CD4-positive, alpha-beta T cell (primary cell): ENCODE measurements at regions of chr5 and their contacts with region 1.

Region 1: DNA sequence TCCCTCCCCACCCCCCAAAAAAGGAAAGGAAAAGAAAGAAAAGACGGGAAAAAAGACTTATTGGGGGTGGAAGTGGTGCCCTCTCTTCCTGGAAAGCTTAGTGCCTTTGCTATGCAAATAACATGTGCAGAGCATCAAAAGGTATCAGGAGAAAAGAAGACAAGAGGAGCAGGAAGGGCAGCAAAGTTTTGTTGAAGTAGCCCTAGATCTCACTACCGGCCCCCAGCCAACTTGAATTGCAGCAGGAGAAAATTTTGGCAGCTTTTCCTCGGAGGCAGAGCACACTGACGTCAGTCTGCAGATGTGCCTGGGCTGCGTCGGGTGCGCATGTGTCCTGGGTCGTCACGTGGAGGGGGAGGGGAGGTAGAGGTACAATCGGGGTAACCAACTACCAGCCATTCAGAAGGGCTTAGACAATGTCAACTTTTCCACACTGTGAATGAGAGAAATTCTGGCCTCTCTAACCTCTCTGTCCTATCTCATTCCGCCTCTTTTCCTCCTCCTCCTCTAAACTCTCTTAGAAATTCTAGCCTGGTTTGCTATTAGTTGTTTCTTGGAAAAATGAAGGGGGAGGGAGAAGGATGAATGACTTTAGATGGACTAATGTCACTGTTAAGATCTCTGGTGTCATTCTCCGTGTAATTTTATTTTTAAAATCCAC is at the start of gene ADAMTS6:
- DNase-seq: peak; percentile 46 to 88 (median 72)
- ATAC-seq: peak; percentile 87
- H3K4me3 ChIP-seq: peak within 1 kb of the TSS; percentile 78
- H3K4me3 Mint-ChIP-seq: peak within 1 kb of the TSS; percentile 94
- H3K27ac ChIP-seq: peak within 1 kb of the TSS in 1 of 2 donors; percentile 57
- H3K27ac Mint-ChIP-seq: peak within 1 kb of the TSS; percentile 80
- H3K4me1 ChIP-seq: peaks cover 8% of the 10 kb centered on the region
- H3K4me1 Mint-ChIP-seq: peaks cover 14% of the 10 kb centered on the region
- H3K27me3 ChIP-seq: peaks cover 3 to 7% of the 10 kb centered on the region in 2 experiments
- H3K27me3 Mint-ChIP-seq: no peaks in the 10 kb centered on the region
- CTCF ChIP-seq: no peak
- total RNA-seq, gene ADAMTS6: 2.0 to 2.6 TPM

Region 2: DNA sequence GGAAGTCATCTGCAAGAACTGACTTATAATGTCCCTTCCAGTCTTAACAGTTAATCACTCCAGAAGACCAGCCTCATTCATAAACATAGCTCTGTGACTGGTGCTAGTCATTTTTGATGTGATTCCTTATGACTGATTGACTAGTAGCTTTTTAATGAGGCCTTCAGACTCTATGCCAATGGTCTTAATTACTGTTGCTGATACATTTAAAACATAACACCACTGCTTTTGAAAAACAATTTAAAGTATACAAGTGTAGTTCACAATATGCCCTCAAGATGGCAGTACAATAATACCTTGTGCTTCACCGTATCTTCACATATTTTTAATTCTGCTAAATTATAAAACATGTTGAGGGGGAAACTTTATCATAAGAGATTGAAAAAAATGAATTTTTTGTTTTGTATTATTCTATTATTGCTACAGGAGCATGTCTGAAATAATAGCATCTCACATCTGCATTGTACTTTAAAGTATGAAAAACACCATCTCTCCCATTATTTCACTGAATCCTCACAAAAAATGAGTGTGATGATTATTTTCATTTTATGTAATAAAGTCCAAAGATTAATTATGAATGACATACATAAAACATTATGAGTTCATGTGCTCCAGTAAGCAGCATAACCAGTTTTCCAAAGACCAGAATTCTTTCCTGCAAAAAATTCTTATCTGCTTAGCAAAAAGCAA is 846.6 kb before region 1 on chr5:
- CTCF ChIA-PET with region 1: no interaction called
- POLR2A ChIA-PET with region 1: no interaction called
- intact Hi-C with region 1: loop called (anchors 2 to 5 kb)
- DNase-seq: peak in 3 of 14 experiments; percentile 36 to 63 (median 52)
- ATAC-seq: peak; percentile 39
- H3K4me3 ChIP-seq: no peak overlapping the region
- H3K4me3 Mint-ChIP-seq: no peak overlapping the region
- H3K27ac ChIP-seq: no peak overlapping the region
- H3K27ac Mint-ChIP-seq: no peak overlapping the region
- H3K4me1 ChIP-seq: no peaks in the 10 kb centered on the region
- H3K4me1 Mint-ChIP-seq: no peaks in the 10 kb centered on the region
- H3K27me3 ChIP-seq: peaks cover 0 to 8% of the 10 kb centered on the region in 2 experiments
- H3K27me3 Mint-ChIP-seq: peaks cover 30% of the 10 kb centered on the region
- CTCF ChIP-seq: peak; percentile 88

Region 3: GRCh38 chr5:64958757-64959391 is 522.9 kb before region 1 on chr5:
- CTCF ChIA-PET with region 1: interaction called, 13 read pairs
- POLR2A ChIA-PET with region 1: interaction called, 3 read pairs
- intact Hi-C with region 1: loop called (anchors 1 to 2 kb)
- DNase-seq: peak in 3 of 14 experiments; percentile 33 to 50 (median 40)
- ATAC-seq: no peak
- H3K4me3 ChIP-seq: no peak overlapping the region
- H3K4me3 Mint-ChIP-seq: no peak overlapping the region
- H3K27ac ChIP-seq: no peak overlapping the region
- H3K27ac Mint-ChIP-seq: no peak overlapping the region
- H3K4me1 ChIP-seq: no peaks in the 10 kb centered on the region
- H3K4me1 Mint-ChIP-seq: no peaks in the 10 kb centered on the region
- H3K27me3 ChIP-seq: no peaks in the 10 kb centered on the region
- H3K27me3 Mint-ChIP-seq: no peaks in the 10 kb centered on the region
- CTCF ChIP-seq: peak; percentile 57

Region 4: GRCh38 chr5:65076251-65076869 is 405.4 kb before region 1 on chr5:
- CTCF ChIA-PET with region 1: no interaction called
- POLR2A ChIA-PET with region 1: no interaction called
- intact Hi-C with region 1: loop called in 1 of 2 experiments (anchors 10 kb)
- DNase-seq: peak in 13 of 14 experiments; percentile 4 to 79 (median 27)
- ATAC-seq: peak; percentile 71
- H3K4me3 ChIP-seq: no peak overlapping the region
- H3K4me3 Mint-ChIP-seq: no peak overlapping the region
- H3K27ac ChIP-seq: no peak overlapping the region
- H3K27ac Mint-ChIP-seq: no peak overlapping the region
- H3K4me1 ChIP-seq: no peaks in the 10 kb centered on the region
- H3K4me1 Mint-ChIP-seq: no peaks in the 10 kb centered on the region
- H3K27me3 ChIP-seq: peaks cover 0 to 3% of the 10 kb centered on the region in 2 experiments
- H3K27me3 Mint-ChIP-seq: peaks cover 5% of the 10 kb centered on the region
- CTCF ChIP-seq: peak; percentile 39

Region 5: GRCh38 chr5:65512170-65512937 is 30.6 kb after region 1 on chr5:
- CTCF ChIA-PET with region 1: no interaction called
- POLR2A ChIA-PET with region 1: no interaction called
- intact Hi-C with region 1: no loop called
- DNase-seq: no peak
- ATAC-seq: no peak
- H3K4me3 ChIP-seq: no peak overlapping the region
- H3K4me3 Mint-ChIP-seq: no peak overlapping the region
- H3K27ac ChIP-seq: no peak overlapping the region
- H3K27ac Mint-ChIP-seq: no peak overlapping the region
- H3K4me1 ChIP-seq: no peaks in the 10 kb centered on the region
- H3K4me1 Mint-ChIP-seq: no peaks in the 10 kb centered on the region
- H3K27me3 ChIP-seq: no peaks in the 10 kb centered on the region
- H3K27me3 Mint-ChIP-seq: no peaks in the 10 kb centered on the region
- CTCF ChIP-seq: no peak

Region 6: GRCh38 chr5:66010476-66010875 is 528.7 kb after region 1 on chr5:
- CTCF ChIA-PET with region 1: no interaction called
- POLR2A ChIA-PET with region 1: no interaction called
- intact Hi-C with region 1: loop called in 1 of 2 experiments (anchors 5 kb)
- DNase-seq: peak in 3 of 14 experiments; percentile 18 to 49 (median 28)
- ATAC-seq: peak; percentile 93
- H3K4me3 ChIP-seq: no peak overlapping the region
- H3K4me3 Mint-ChIP-seq: peak overlapping the region; percentile 7
- H3K27ac ChIP-seq: no peak overlapping the region
- H3K27ac Mint-ChIP-seq: peak overlapping the region; percentile 90
- H3K4me1 ChIP-seq: peaks cover 2% of the 10 kb centered on the region
- H3K4me1 Mint-ChIP-seq: peaks cover 55% of the 10 kb centered on the region
- H3K27me3 ChIP-seq: no peaks in the 10 kb centered on the region
- H3K27me3 Mint-ChIP-seq: no peaks in the 10 kb centered on the region
- CTCF ChIP-seq: no peak